ENCODE measurements at regions of chr12 and their contacts with region 1.

Region 1: DNA sequence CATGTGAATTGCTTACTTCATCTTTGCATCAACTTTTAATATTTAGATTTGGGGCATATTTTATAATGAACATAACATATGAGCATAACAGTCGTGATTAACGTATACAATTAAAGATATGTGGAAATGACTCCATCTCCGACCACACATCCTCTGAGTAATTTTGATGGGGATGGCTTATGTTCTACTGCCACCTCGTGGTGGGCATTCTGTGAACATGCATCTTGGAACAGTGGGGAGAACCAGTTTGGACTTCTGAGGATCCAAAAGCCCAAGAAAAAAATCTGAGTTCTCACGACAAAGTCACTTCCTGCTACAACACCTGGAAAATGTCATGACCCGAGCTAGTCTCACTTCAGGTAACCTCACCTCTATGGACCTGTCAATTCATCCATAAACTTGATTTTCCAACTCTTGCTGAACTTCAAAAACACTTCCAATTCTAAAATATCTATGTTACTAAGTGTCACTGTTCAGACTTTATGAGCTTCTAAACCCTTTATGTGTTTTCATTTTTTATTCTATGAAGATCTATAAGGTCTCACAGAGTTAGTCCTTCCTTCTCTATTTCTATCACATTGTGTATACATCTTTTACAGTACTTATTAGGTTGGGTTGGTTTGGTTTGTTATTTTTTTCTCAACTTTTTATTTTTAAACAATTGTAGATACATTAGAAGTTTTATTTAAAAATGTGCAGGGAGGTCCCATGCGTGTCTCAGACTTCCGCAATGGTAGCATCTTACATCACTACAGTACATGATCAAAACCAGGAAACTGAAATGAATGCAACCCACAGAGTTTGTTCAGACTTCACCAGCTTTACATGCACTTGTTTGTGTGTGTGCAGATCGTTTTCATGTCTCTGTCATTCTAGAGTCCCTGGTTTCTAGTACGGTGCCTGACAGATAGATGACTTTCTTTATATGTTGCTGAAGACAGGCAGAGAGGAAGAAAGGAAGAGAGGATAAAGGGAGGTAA is 38.2 kb upstream of the STAB2 start:
- DNase-seq: peak; percentile 10 to 82 (median 58)
- ATAC-seq: peak; percentile 52 to 65 (median 57)
- H3K4me3 ChIP-seq: no peak overlapping the region
- H3K4me3 Mint-ChIP-seq: no peak overlapping the region
- H3K27ac ChIP-seq: no peak overlapping the region
- H3K27ac Mint-ChIP-seq: no peak overlapping the region
- H3K4me1 ChIP-seq: no peaks in the 10 kb centered on the region
- H3K4me1 Mint-ChIP-seq: peaks cover 0 to 6% (median 4%) of the 10 kb centered on the region in 3 donors
- H3K27me3 ChIP-seq: peaks cover 0 to 2% of the 10 kb centered on the region in 2 experiments
- H3K27me3 Mint-ChIP-seq: peaks cover 15 to 19% of the 10 kb centered on the region in 2 donors

Region 2: GRCh38 chr12:102883204-102883799 is 665.6 kb before region 1 on chr12:
- CTCF ChIA-PET with region 1: interaction called, 17 to 26 read pairs
- POLR2A ChIA-PET with region 1: no interaction called
- DNase-seq: peak in 25 of 35 experiments; percentile 2 to 50 (median 14)
- ATAC-seq: no peak
- H3K4me3 ChIP-seq: no peak overlapping the region
- H3K4me3 Mint-ChIP-seq: no peak overlapping the region
- H3K27ac ChIP-seq: no peak overlapping the region
- H3K27ac Mint-ChIP-seq: no peak overlapping the region
- H3K4me1 ChIP-seq: no peaks in the 10 kb centered on the region
- H3K4me1 Mint-ChIP-seq: peaks cover 0 to 6% (median 0%) of the 10 kb centered on the region in 3 donors
- H3K27me3 ChIP-seq: peaks cover 0 to 14% of the 10 kb centered on the region in 2 experiments
- H3K27me3 Mint-ChIP-seq: peaks cover 10 to 17% of the 10 kb centered on the region in 2 donors

Region 3: DNA sequence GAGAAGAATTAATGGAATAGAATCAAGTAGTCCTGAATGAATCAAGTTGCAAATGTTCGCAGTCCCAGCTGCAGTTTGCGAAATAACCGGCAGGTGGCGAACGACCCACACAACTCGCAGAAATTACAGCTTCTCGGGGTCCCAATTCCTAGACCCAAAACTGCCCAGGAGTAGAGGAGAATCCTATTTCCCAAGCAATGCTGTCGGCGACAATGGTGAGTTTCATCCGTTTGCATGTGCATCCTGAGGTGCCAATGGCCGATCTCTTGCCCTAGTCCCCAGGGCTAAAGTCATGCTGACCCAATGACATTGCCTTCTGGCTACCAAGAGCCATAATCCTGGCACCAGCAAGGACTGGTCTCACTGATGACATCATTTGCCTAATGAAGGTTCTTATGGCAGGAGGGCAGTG is 600.0 kb before region 1 on chr12:
- CTCF ChIA-PET with region 1: interaction called, 10 to 33 read pairs
- POLR2A ChIA-PET with region 1: no interaction called
- DNase-seq: peak in 25 of 35 experiments; percentile 7 to 66 (median 30)
- ATAC-seq: no peak
- H3K4me3 ChIP-seq: no peak overlapping the region
- H3K4me3 Mint-ChIP-seq: no peak overlapping the region
- H3K27ac ChIP-seq: no peak overlapping the region
- H3K27ac Mint-ChIP-seq: no peak overlapping the region
- H3K4me1 ChIP-seq: peaks cover 0 to 7% of the 10 kb centered on the region in 2 experiments
- H3K4me1 Mint-ChIP-seq: peaks cover 5 to 14% (median 6%) of the 10 kb centered on the region in 3 donors
- H3K27me3 ChIP-seq: peaks cover 15 to 20% of the 10 kb centered on the region in 2 experiments
- H3K27me3 Mint-ChIP-seq: peaks cover 55 to 56% of the 10 kb centered on the region in 2 donors

Measured in T-cell (primary cell).